ENCODE measurements at regions of chr12 and their contacts with region 1.

Region 1: DNA sequence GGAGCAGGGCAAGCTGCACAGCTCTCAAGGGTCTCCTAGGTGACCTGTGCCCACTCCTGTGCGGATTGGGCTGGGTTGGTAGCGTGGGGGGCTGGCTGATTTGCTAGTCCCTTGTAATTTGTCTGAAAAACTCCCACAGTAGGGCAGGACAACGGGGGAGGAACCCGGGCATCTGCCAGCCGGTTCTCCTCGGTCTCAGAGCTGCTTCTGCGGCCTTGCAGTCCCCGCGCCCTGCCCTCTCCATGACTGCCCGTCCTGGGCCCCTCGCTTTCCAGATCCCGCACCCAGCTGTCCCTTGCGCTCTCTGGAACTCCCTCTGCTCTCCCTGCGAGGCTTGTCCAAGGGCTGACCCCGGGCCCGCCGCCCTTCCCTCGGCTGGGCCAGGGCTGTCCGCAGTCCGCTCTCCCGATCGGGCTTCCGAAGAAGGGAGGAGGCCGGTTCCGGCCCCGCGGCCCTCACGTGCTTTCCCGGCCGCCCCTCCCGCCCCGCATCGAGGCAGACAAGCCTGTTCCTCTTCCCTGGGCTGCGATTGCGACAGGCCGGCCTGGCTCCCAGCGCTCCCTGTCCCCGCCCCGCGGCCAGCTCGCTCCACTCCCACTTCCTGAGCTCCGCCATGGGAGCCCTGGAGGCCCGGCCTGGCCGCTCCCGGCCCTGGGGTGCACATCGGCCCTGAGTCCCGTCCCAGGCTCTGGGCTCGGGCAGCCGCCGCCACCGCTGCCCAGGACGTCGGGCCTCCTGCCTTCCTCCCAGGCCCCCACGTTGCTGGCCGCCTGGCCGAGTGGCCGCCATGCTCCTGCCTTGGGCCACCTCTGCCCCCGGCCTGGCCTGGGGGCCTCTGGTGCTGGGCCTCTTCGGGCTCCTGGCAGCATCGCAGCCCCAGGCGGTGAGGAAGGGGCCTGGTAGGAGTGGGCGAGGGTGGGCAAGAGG is at the start of gene LTBR:
- DNase-seq: peak; percentile 87 to 99 (median 91)
- H3K4me3 ChIP-seq: peak within 1 kb of the TSS; percentile 52 to 78 (median 69)
- H3K27ac ChIP-seq: peak within 1 kb of the TSS; percentile 96 to 97
- H3K4me1 ChIP-seq: peaks cover 0 to 24% (median 12%) of the 10 kb centered on the region in 3 donors
- H3K27me3 ChIP-seq: no peaks in the 10 kb centered on the region
- CTCF ChIP-seq: peak; percentile 21
- total RNA-seq, gene LTBR: 114 TPM

Region 2: GRCh38 chr12:6326336-6326838 is 57.4 kb before region 1 on chr12:
- intact Hi-C with region 1: loop called (anchors 5 kb)
- DNase-seq: peak in 4 of 5 donors; percentile 75 to 91 (median 78)
- H3K4me3 ChIP-seq: no peak overlapping the region
- H3K27ac ChIP-seq: no peak overlapping the region
- H3K4me1 ChIP-seq: peaks cover 0 to 46% (median 25%) of the 10 kb centered on the region in 3 donors
- H3K27me3 ChIP-seq: no peaks in the 10 kb centered on the region
- CTCF ChIP-seq: peak; percentile 39